ENCODE measurements at regions of chr20 and their contacts with region 1.

Region 1: GRCh38 chr20:50484276-50484976 is 25.8 kb upstream of the PTPN1 start:
- DNase-seq: no peak
- H3K4me3 ChIP-seq: peak overlapping the region; percentile 45 to 56
- H3K27ac ChIP-seq: peak overlapping the region; percentile 88
- H3K4me1 ChIP-seq: no peaks in the 10 kb centered on the region
- H3K27me3 ChIP-seq: no peaks in the 10 kb centered on the region
- CTCF ChIP-seq: no peak
- POLR2A ChIP-seq: no peak

Region 2: GRCh38 chr20:50434653-50435396 is 49.6 kb before region 1 on chr20:
- intact Hi-C with region 1: no loop called
- DNase-seq: no peak
- H3K4me3 ChIP-seq: no peak overlapping the region
- H3K27ac ChIP-seq: no peak overlapping the region
- H3K4me1 ChIP-seq: peaks cover 17% of the 10 kb centered on the region
- H3K27me3 ChIP-seq: no peaks in the 10 kb centered on the region
- CTCF ChIP-seq: no peak
- POLR2A ChIP-seq: no peak

Region 3: GRCh38 chr20:50575847-50576720 is 91.7 kb after region 1 on chr20:
- intact Hi-C with region 1: loop called (anchors 5 kb)
- DNase-seq: peak in 1 of 2 donors; percentile 89
- H3K4me3 ChIP-seq: no peak overlapping the region
- H3K27ac ChIP-seq: peak overlapping the region; percentile 20
- H3K4me1 ChIP-seq: peaks cover 27% of the 10 kb centered on the region
- H3K27me3 ChIP-seq: no peaks in the 10 kb centered on the region
- CTCF ChIP-seq: peak; percentile 54 to 80 (median 63)
- POLR2A ChIP-seq: no peak

Measured in vagina (tissue), 2 donors.